ENCODE measurements at regions of chr1 and their contacts with region 1.

Region 1: GRCh38 chr1:193283016-193283415 is 96.6 kb upstream of the B3GALT2 start:
- DNase-seq: peak; percentile 80
- H3K4me3 ChIP-seq: no peak overlapping the region
- CTCF ChIP-seq: no peak

Region 2: GRCh38 chr1:193322223-193322622 is 39.2 kb after region 1 on chr1:
- in situ Hi-C with region 1: loop called (anchors 5 kb)
- DNase-seq: peak; percentile 58
- H3K4me3 ChIP-seq: no peak overlapping the region
- CTCF ChIP-seq: no peak

Region 3: GRCh38 chr1:193434319-193434718 is 151.3 kb after region 1 on chr1:
- in situ Hi-C with region 1: no loop called
- DNase-seq: no peak
- H3K4me3 ChIP-seq: no peak overlapping the region
- CTCF ChIP-seq: no peak